ENCODE measurements at regions of chr2 and their contacts with region 1.

Region 1: DNA sequence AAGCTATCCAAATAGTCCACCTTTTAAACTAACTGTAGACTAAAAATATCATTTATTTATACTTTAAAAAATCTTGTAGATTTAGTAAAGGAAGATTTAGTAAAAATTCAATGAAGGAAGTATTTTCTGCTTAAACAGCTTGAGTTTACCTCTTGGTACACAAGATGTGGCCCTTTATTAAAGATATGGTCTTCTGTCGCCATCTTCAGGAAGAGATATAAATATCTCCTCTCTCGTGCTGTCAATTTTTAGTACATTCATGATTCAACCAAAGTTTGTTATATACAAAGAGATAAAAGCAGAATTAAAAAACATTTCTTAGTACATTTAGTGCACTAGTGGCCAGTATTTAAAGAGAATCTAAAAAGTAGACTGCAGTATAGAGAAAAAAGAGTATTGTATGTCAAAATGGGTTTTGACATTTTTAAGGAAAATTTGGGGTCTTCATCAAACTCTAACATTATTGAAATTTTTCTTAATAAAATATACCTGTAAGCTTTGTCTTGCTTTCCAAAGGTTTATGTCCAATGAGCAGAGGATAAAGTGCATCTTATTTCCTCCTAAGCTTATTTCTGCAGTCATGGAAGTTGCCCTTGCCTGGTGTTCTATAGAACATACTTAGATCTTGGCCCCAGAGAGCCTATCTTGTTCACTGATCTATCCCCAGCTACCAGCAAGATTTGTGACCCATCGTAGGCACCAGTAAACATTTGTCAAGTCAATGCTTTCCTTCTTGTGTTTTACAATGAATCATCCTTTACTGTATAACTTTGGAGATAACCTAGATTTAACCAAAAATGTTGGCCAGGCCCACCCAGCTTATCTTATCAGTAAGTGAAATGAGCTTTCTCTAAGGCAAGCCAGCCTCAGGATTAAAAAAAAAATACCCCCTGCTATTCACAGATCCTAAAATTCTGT is 18.5 kb upstream of the EML6 start:
- DNase-seq: peak in 1 of 35 experiments; percentile 77
- ATAC-seq: peak; percentile 35 to 61 (median 59)
- H3K4me3 ChIP-seq: no peak overlapping the region
- H3K4me3 Mint-ChIP-seq: no peak overlapping the region
- H3K27ac ChIP-seq: no peak overlapping the region
- H3K27ac Mint-ChIP-seq: no peak overlapping the region
- H3K4me1 ChIP-seq: peaks cover 0 to 15% of the 10 kb centered on the region in 2 experiments
- H3K4me1 Mint-ChIP-seq: peaks cover 0 to 8% (median 2%) of the 10 kb centered on the region in 3 donors
- H3K27me3 ChIP-seq: peaks cover 0 to 17% of the 10 kb centered on the region in 2 experiments
- H3K27me3 Mint-ChIP-seq: peaks cover 13 to 15% of the 10 kb centered on the region in 2 donors

Region 2: DNA sequence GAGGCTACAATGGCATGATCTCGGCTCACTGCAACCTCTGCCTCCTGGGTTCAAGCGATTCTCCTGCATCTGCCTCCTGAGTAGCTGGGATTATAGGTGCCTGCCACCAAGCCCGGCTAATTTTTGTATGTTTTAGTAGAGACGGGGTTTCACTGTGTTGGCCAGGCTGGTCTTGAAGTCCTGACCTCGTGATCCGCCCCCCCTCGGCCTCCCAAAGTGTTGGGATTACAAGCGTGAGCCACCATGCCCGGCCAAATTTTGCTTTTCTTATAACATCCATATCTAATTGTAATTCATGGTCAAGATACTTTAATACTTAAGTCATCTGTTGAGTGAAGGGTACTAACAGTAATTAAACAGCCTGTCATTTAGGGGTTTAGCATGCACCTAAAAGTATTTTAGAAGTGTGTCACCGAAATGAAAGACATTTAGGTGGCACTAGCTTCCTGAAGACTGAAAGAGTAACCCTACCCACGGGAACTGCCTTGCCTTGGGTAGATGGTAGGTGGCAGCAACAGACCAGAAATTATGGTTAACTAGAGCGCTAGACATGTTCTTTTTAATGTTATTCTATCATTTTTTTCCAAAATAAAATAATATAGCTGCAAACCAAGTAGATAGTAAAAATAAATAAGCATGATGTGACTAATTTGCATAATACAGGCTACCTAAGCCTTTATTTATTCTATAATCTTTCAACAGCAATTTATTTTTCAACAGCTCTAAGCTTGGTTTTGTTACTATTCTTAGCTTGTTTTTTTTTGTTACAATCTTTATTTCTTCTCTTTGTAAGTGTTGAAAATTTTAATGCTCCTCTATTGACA is 598.1 kb before region 1 on chr2:
- CTCF ChIA-PET with region 1: interaction called, 16 to 28 read pairs
- POLR2A ChIA-PET with region 1: no interaction called
- DNase-seq: peak in 31 of 35 experiments; percentile 9 to 73 (median 33)
- ATAC-seq: peak; percentile 50 to 89 (median 65)
- H3K4me3 ChIP-seq: no peak overlapping the region
- H3K4me3 Mint-ChIP-seq: no peak overlapping the region
- H3K27ac ChIP-seq: no peak overlapping the region
- H3K27ac Mint-ChIP-seq: no peak overlapping the region
- H3K4me1 ChIP-seq: peaks cover 0 to 4% of the 10 kb centered on the region in 2 experiments
- H3K4me1 Mint-ChIP-seq: peaks cover 6 to 22% (median 10%) of the 10 kb centered on the region in 3 donors
- H3K27me3 ChIP-seq: no peaks in the 10 kb centered on the region
- H3K27me3 Mint-ChIP-seq: no peaks in the 10 kb centered on the region

Region 3: DNA sequence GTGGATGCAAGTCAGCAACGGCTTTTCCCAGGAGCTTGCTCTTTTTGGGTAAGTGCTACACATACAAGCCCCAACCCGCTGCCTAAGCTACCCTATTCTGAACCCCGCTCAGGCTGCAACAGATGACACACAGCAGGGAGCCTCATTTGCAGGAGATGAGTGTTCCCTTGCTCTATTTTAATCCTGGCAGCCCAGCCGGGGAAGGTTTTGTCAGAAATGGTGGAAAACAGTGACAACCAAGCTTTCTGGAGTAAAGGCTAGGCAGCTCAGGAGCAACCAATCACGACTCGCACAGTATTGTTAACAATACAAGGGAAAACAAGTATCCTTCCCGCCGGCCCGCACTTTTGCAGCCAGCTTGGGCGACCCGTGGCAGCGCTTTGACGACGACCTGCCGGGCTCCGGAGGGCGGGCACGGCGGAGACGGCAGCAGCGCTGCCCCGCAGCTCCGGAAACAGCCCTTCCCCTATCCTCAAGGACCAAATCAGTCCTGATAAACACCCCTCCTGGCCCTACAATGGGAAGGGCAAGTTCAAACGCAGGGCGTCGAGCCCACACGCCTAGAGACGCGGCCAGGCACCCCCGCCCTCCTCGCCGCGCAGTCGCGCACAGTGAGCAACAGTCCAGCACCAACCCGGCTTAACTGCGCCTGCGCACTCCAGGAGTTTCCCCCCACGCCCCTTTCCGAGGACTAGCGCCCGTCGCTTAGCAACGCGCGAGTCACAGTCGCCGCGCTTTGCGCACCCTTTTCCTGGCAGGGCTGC is 374.6 kb before region 1 on chr2:
- CTCF ChIA-PET with region 1: interaction called in 1 of 2 experiments, 10 read pairs
- POLR2A ChIA-PET with region 1: no interaction called
- DNase-seq: peak; percentile 63 to 90 (median 78)
- ATAC-seq: peak; percentile 96 to 99 (median 98)
- H3K4me3 ChIP-seq: peak overlapping the region; percentile 60 to 87
- H3K4me3 Mint-ChIP-seq: peak overlapping the region; percentile 84 to 89 (median 85)
- H3K27ac ChIP-seq: no peak overlapping the region
- H3K27ac Mint-ChIP-seq: peak overlapping the region; percentile 25 to 63
- H3K4me1 ChIP-seq: peaks cover 0 to 15% of the 10 kb centered on the region in 2 experiments
- H3K4me1 Mint-ChIP-seq: peaks cover 15 to 18% (median 17%) of the 10 kb centered on the region in 3 donors
- H3K27me3 ChIP-seq: peaks cover 0 to 20% of the 10 kb centered on the region in 2 experiments
- H3K27me3 Mint-ChIP-seq: peaks cover 8 to 14% of the 10 kb centered on the region in 2 donors

Region 4: GRCh38 chr2:54680397-54681041 is 24.4 kb before region 1 on chr2:
- CTCF ChIA-PET with region 1: no interaction called
- POLR2A ChIA-PET with region 1: no interaction called
- DNase-seq: no peak
- ATAC-seq: peak in 1 of 4 experiments; percentile 27
- H3K4me3 ChIP-seq: no peak overlapping the region
- H3K4me3 Mint-ChIP-seq: no peak overlapping the region
- H3K27ac ChIP-seq: no peak overlapping the region
- H3K27ac Mint-ChIP-seq: peak overlapping the region in 1 of 2 donors; percentile 1
- H3K4me1 ChIP-seq: peaks cover 2 to 7% of the 10 kb centered on the region in 2 experiments
- H3K4me1 Mint-ChIP-seq: peaks cover 7 to 19% (median 16%) of the 10 kb centered on the region in 3 donors
- H3K27me3 ChIP-seq: peaks cover 0 to 8% of the 10 kb centered on the region in 2 experiments
- H3K27me3 Mint-ChIP-seq: no peaks in the 10 kb centered on the region

Region 5: DNA sequence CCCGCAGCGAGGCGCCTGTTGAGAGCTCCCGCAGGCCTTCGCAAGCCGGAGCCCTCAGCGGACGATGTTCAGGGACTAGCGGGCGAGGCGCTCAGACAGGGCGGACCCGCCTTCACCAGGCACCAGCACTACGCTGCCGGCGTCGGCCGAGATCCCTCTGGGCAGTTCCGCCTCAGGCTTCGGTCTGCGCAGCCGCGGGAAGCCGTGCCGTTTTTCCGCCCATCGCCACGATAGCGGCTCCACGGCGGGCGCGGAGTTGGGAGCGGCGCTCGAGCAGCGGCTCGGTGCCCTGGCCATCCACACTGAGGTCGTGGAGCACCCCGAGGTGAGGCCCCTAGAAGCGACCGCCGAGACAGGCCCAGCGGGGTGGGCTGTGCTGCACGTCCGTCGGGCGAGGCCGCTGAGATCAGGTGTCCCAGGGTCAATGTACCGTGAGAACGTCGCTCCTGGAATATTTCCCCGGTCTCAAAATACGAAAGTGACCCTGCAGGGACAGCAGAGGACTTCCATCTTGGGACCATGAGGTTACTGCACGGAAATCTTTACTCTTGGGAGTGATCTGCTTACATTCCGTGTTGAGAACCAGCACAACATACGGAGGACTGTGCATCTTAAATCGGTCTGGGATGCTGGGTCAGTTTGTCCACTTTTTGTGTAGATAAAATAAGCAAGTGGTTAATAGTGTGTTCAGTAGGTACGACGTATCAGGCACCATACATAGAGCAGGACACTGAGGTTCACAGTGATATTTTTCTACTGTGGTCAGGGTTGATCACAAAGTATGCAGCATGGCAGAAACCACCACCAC is 577.4 kb after region 1 on chr2:
- CTCF ChIA-PET with region 1: no interaction called
- POLR2A ChIA-PET with region 1: no interaction called
- DNase-seq: peak; percentile 69 to 92 (median 83)
- ATAC-seq: peak; percentile 98 to 99 (median 99)
- H3K4me3 ChIP-seq: peak overlapping the region; percentile 61 to 88
- H3K4me3 Mint-ChIP-seq: peak overlapping the region; percentile 85 to 89 (median 89)
- H3K27ac ChIP-seq: peak overlapping the region; percentile 88
- H3K27ac Mint-ChIP-seq: peak overlapping the region; percentile 96 to 99
- H3K4me1 ChIP-seq: peaks cover 0 to 16% of the 10 kb centered on the region in 2 experiments
- H3K4me1 Mint-ChIP-seq: peaks cover 22 to 40% (median 28%) of the 10 kb centered on the region in 3 donors
- H3K27me3 ChIP-seq: no peaks in the 10 kb centered on the region
- H3K27me3 Mint-ChIP-seq: no peaks in the 10 kb centered on the region

Region 6: GRCh38 chr2:55302241-55302640 is 597.3 kb after region 1 on chr2:
- CTCF ChIA-PET with region 1: no interaction called
- POLR2A ChIA-PET with region 1: no interaction called
- DNase-seq: peak in 1 of 35 experiments; percentile 20
- ATAC-seq: no peak
- H3K4me3 ChIP-seq: no peak overlapping the region
- H3K4me3 Mint-ChIP-seq: no peak overlapping the region
- H3K27ac ChIP-seq: no peak overlapping the region
- H3K27ac Mint-ChIP-seq: no peak overlapping the region
- H3K4me1 ChIP-seq: no peaks in the 10 kb centered on the region
- H3K4me1 Mint-ChIP-seq: peaks cover 0 to 4% (median 3%) of the 10 kb centered on the region in 3 donors
- H3K27me3 ChIP-seq: no peaks in the 10 kb centered on the region
- H3K27me3 Mint-ChIP-seq: no peaks in the 10 kb centered on the region